Heart left ventricle (tissue), 16 donors: ENCODE measurements at regions of chr2 and their contacts with region 1.

Region 1: GRCh38 chr2:12716282-12717190 is at the start of gene TRIB2:
- DNase-seq: peak; percentile 92 to 95 (median 94)
- ATAC-seq: peak; percentile 74 to 90 (median 81)
- H3K4me3 ChIP-seq: peak within 1 kb of the TSS; percentile 68 to 97 (median 87)
- H3K27ac ChIP-seq: peak within 1 kb of the TSS; percentile 90 to 100 (median 96)
- H3K4me1 ChIP-seq: peaks cover 0 to 39% (median 24%) of the 10 kb centered on the region in 12 donors
- H3K27me3 ChIP-seq: no peaks in the 10 kb centered on the region
- CTCF ChIP-seq: peak in 6 of 12 donors; percentile 10 to 39 (median 18)
- POLR2A ChIP-seq: peak; percentile 60 to 88
- total RNA-seq, gene TRIB2: 34.3 to 140 (median 41.4) TPM

Region 2: GRCh38 chr2:12169721-12170120 is 546.8 kb before region 1 on chr2:
- intact Hi-C with region 1: loop called in 5 of 10 experiments (anchors 5 to 10 kb)
- DNase-seq: peak in 4 of 5 donors; percentile 63 to 69 (median 66)
- ATAC-seq: peak; percentile 37 to 92 (median 76)
- H3K4me3 ChIP-seq: no peak overlapping the region
- H3K27ac ChIP-seq: peak overlapping the region in 11 of 12 donors; percentile 48 to 87 (median 66)
- H3K4me1 ChIP-seq: peaks cover 14 to 33% (median 26%) of the 10 kb centered on the region in 12 donors
- H3K27me3 ChIP-seq: no peaks in the 10 kb centered on the region
- CTCF ChIP-seq: no peak
- POLR2A ChIP-seq: no peak

Region 3: DNA sequence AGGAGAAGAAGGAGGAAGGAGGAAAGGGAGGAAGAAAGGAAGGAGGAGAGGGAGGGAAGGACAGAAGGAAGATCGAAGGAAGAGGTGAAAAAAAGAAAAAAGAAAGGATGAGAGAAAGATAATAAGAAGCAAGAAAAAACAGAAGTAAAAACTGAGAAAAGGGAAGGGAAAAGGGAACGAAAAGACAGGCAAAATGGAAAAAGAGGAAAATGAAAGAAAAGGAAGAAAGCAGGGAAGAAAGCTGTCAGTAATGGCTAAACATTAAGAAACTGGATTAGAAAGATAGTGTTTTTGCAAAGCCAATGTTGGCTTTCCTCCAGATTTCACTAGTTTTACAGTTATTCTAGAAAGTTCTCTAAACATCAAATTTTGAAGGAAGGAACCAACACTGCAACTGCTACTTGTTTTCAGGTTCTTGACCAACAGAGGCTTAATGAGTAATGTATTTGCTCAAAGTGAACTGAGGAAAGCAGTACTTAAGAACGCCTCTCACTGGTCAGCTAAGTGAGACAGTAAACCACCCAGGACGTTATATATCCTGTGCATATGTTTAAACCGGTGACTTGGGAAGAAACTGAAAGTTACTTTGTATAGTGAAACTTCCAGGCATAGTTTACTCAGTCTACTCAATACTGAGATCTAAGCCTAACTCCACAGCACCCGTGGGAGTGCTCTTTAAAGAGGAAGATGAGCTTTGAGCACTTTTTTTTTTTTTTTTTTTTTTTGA is 286.0 kb before region 1 on chr2:
- intact Hi-C with region 1: loop called in 1 of 10 experiments (anchors 10 kb)
- DNase-seq: no peak
- ATAC-seq: peak in 2 of 4 donors; percentile 36 to 42
- H3K4me3 ChIP-seq: peak overlapping the region in 1 of 12 donors; percentile 12
- H3K27ac ChIP-seq: peak overlapping the region in 1 of 12 donors; percentile 66
- H3K4me1 ChIP-seq: peaks cover 0 to 14% (median 2%) of the 10 kb centered on the region in 12 donors
- H3K27me3 ChIP-seq: no peaks in the 10 kb centered on the region
- CTCF ChIP-seq: no peak
- POLR2A ChIP-seq: no peak

Region 4: DNA sequence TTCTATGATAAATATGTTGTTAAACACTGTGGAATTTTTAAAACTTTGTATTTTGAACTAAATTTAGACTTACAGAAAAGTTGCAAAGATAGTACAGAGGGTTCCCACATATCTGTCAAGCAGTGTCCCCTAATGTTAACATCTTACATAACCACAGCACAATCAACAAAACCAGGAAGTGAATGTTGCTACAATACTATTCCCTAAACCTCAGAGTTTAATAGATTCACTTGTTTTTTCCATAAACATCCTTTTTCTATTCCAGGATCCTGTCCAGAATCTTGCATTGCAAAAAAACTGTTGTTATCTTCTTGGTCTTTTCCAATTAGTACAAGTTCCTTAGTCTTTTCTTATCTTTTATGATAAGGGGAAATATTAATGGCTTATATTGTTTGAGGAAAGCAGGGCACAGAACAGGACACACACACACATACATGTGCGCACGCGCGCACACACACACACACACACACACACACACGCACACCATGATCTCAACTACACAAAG is 250.9 kb before region 1 on chr2:
- intact Hi-C with region 1: no loop called
- DNase-seq: no peak
- ATAC-seq: peak; percentile 34 to 88 (median 54)
- H3K4me3 ChIP-seq: no peak overlapping the region
- H3K27ac ChIP-seq: peak overlapping the region in 6 of 12 donors; percentile 3 to 64 (median 17)
- H3K4me1 ChIP-seq: peaks cover 0 to 18% (median 5%) of the 10 kb centered on the region in 12 donors
- H3K27me3 ChIP-seq: no peaks in the 10 kb centered on the region
- CTCF ChIP-seq: peak in 1 of 12 donors; percentile 22
- POLR2A ChIP-seq: no peak

Region 5: DNA sequence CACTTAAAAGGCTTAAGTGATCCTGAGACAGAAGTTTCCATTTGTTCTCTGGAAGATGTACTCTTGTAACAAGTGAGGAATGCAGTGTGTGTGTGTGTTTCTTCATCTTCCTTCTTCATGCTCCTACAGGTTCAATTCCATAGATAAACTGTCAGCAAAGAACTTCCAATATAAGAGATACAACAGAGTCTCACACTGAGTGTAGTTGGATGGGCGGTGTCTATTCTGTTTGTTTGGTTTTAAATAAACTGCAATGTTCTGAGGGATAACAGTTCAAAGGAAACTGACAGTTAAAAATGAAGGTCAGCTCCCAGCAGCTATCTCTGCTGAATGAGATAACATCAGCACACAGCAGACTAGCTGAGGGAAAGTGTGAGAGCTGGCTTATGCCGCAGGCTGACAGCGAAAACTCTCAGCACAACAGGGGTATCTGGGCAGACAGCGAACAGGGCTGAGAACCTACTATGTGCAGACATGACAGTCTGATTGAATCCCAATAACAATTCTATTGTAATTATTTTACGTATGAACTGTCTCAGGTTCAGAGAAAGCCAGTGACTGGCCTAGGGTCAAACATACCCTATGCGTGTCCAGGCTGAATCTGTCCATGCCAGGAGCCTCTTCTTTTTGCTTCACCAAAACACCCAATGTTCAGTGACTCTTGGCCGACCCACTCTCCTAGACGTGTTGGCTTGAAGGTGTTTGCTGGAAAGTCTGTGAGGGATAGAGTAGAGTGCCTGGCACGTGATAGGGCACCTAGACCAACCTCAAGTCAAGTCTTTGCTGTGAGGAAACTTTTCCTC is 201.7 kb before region 1 on chr2:
- intact Hi-C with region 1: no loop called
- DNase-seq: no peak
- ATAC-seq: no peak
- H3K4me3 ChIP-seq: no peak overlapping the region
- H3K27ac ChIP-seq: no peak overlapping the region
- H3K4me1 ChIP-seq: peaks cover 0 to 9% (median 0%) of the 10 kb centered on the region in 12 donors
- H3K27me3 ChIP-seq: no peaks in the 10 kb centered on the region
- CTCF ChIP-seq: no peak
- POLR2A ChIP-seq: no peak

Region 6: GRCh38 chr2:12534646-12535263 is 181.8 kb before region 1 on chr2:
- intact Hi-C with region 1: loop called in 3 of 10 experiments (anchors 5 to 10 kb)
- DNase-seq: peak in 2 of 5 donors; percentile 30 to 34
- ATAC-seq: peak in 2 of 4 donors; percentile 70 to 86
- H3K4me3 ChIP-seq: no peak overlapping the region
- H3K27ac ChIP-seq: peak overlapping the region in 6 of 12 donors; percentile 20 to 67 (median 32)
- H3K4me1 ChIP-seq: peaks cover 0 to 37% (median 12%) of the 10 kb centered on the region in 12 donors
- H3K27me3 ChIP-seq: no peaks in the 10 kb centered on the region
- CTCF ChIP-seq: no peak
- POLR2A ChIP-seq: no peak

Region 7: DNA sequence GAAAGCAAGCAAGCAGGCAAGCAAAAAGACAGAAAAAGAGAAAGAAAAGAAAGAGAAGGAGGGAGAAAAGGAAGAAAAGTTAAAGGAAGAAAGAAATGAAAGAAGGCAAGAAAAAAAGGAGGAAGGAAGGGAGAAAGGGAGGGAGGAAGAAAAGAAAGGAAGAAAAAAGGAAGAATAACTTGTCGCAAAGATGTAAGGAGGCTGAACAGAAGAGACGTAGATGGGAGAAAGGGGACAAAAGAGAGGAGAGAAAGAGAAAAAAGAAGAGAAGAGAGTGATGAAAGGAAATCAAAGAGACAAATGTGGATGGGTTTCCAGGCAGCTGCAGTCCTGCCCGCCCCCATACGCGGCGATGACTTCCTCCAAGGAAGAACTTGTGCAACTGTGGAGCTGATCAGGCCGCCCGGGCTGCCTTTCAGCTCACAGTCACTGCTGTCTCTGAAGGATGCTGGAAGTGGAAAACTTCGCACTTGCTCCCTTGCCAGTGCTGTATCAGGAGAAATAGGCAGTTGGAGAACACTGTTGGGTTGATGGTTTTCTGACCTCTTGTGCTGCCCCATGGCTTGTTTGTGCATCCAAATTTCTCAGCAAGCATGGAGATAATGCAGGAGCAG is 53.1 kb after region 1 on chr2:
- intact Hi-C with region 1: no loop called
- DNase-seq: peak; percentile 70 to 80 (median 75)
- ATAC-seq: peak; percentile 66 to 91 (median 87)
- H3K4me3 ChIP-seq: no peak overlapping the region
- H3K27ac ChIP-seq: peak overlapping the region in 4 of 12 donors; percentile 25 to 56 (median 48)
- H3K4me1 ChIP-seq: peaks cover 0 to 18% (median 0%) of the 10 kb centered on the region in 12 donors
- H3K27me3 ChIP-seq: peaks cover 0 to 3% (median 0%) of the 10 kb centered on the region in 9 donors
- CTCF ChIP-seq: no peak
- POLR2A ChIP-seq: no peak

Region 8: GRCh38 chr2:12824351-12824777 is 107.8 kb after region 1 on chr2:
- intact Hi-C with region 1: loop called in 7 of 10 experiments (anchors 2 to 10 kb)
- DNase-seq: peak in 4 of 5 donors; percentile 58 to 79 (median 70)
- ATAC-seq: peak; percentile 48 to 81 (median 67)
- H3K4me3 ChIP-seq: peak overlapping the region in 1 of 12 donors; percentile 10
- H3K27ac ChIP-seq: peak overlapping the region; percentile 79 to 95 (median 86)
- H3K4me1 ChIP-seq: peaks cover 9 to 49% (median 36%) of the 10 kb centered on the region in 12 donors
- H3K27me3 ChIP-seq: no peaks in the 10 kb centered on the region
- CTCF ChIP-seq: no peak
- POLR2A ChIP-seq: no peak

Region 9: GRCh38 chr2:12835733-12836132 is 119.2 kb after region 1 on chr2:
- intact Hi-C with region 1: no loop called
- DNase-seq: peak in 1 of 5 donors; percentile 39
- ATAC-seq: peak; percentile 64 to 85 (median 76)
- H3K4me3 ChIP-seq: no peak overlapping the region
- H3K27ac ChIP-seq: peak overlapping the region in 7 of 12 donors; percentile 24 to 65 (median 49)
- H3K4me1 ChIP-seq: peaks cover 0 to 24% (median 8%) of the 10 kb centered on the region in 12 donors
- H3K27me3 ChIP-seq: no peaks in the 10 kb centered on the region
- CTCF ChIP-seq: no peak
- POLR2A ChIP-seq: no peak

Region 10: GRCh38 chr2:13006829-13007717 is 290.5 kb after region 1 on chr2:
- intact Hi-C with region 1: loop called in 9 of 10 experiments (anchors 2 to 10 kb)
- DNase-seq: peak in 4 of 5 donors; percentile 46 to 66 (median 64)
- ATAC-seq: peak; percentile 85 to 92 (median 90)
- H3K4me3 ChIP-seq: peak overlapping the region in 10 of 12 donors; percentile 8 to 54 (median 31)
- H3K27ac ChIP-seq: peak overlapping the region in 11 of 12 donors; percentile 1 to 60 (median 46)
- H3K4me1 ChIP-seq: peaks cover 0 to 42% (median 17%) of the 10 kb centered on the region in 12 donors
- H3K27me3 ChIP-seq: no peaks in the 10 kb centered on the region
- CTCF ChIP-seq: peak; percentile 82 to 93 (median 90)
- POLR2A ChIP-seq: no peak